ENCODE measurements at regions of chr1 and their contacts with region 1.

Region 1: GRCh38 chr1:52002038-52002917 is 11.8 kb upstream of the RAB3B start:
- DNase-seq: peak; percentile 86
- H3K4me3 ChIP-seq: no peak overlapping the region
- H3K27ac ChIP-seq: no peak overlapping the region
- H3K4me1 ChIP-seq: no peaks in the 10 kb centered on the region
- CTCF ChIP-seq: peak; percentile 96

Region 2: DNA sequence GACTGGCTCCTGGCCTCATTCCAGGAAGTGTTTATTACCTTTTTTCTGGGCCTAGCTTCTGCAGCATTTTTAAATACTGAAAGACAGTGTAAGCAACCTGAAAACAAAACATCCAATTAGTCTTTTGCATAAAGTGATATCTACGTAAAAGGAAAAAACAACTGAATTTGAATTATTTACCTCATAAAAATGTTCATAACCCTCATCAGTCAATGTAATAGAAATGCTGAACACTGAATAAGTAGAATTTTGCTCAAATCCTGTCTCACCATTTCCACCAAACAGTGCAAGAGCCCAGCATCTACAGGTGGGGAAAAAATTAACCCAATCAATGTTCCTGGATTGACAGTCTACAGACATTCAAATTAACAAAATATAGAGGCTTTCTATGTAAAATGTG is 187.8 kb before region 1 on chr1:
- CTCF ChIA-PET with region 1: no interaction called
- POLR2A ChIA-PET with region 1: no interaction called
- intact Hi-C with region 1: loop called (anchors 5 kb)
- DNase-seq: no peak
- H3K4me3 ChIP-seq: no peak overlapping the region
- H3K27ac ChIP-seq: no peak overlapping the region
- H3K4me1 ChIP-seq: no peaks in the 10 kb centered on the region
- CTCF ChIP-seq: no peak

Region 3: DNA sequence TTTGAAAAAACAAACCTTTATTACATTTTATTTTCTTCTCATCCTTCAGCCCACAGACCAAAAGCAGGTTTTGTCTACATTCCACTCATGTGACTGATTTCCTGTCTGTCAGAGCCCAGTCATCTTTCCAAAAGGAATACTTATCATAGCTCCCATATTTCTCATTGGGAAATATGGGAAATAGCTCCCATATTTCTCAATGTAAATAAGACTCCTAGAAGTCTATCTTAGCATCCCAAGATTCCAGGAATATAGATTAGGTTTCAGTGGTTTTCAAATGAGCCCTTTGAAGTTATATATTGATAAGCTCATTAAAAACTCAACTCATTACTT is 104.6 kb before region 1 on chr1:
- CTCF ChIA-PET with region 1: interaction called, 3 read pairs
- POLR2A ChIA-PET with region 1: no interaction called
- intact Hi-C with region 1: loop called (anchors 1 kb)
- DNase-seq: no peak
- H3K4me3 ChIP-seq: no peak overlapping the region
- H3K27ac ChIP-seq: no peak overlapping the region
- H3K4me1 ChIP-seq: no peaks in the 10 kb centered on the region
- CTCF ChIP-seq: no peak

Region 4: DNA sequence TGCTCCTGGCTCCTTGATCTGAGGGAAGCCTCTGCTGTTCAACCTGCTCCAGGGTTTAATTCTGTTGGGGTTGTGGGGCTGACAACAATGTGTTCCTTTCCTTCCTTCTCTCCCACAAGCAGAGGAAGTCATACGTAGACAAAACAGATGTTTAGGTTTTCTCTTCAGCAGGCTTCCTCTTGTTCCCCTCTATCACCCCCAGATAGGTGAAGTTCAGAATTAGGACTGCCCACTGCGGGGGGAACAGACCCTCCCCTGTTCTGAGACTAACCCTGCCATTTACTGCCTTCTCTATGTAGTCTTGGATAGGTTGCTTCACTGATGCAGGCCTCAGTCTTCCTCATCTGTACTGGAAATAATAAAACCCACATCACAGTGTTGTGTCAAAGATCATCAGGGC is 93.8 kb before region 1 on chr1:
- CTCF ChIA-PET with region 1: no interaction called
- POLR2A ChIA-PET with region 1: no interaction called
- intact Hi-C with region 1: no loop called
- DNase-seq: no peak
- H3K4me3 ChIP-seq: no peak overlapping the region
- H3K27ac ChIP-seq: no peak overlapping the region
- H3K4me1 ChIP-seq: peaks cover 5% of the 10 kb centered on the region
- CTCF ChIP-seq: no peak

Region 5: GRCh38 chr1:51926171-51926812 is 76.0 kb before region 1 on chr1:
- CTCF ChIA-PET with region 1: no interaction called
- POLR2A ChIA-PET with region 1: no interaction called
- intact Hi-C with region 1: no loop called
- DNase-seq: peak; percentile 13
- H3K4me3 ChIP-seq: no peak overlapping the region
- H3K27ac ChIP-seq: no peak overlapping the region
- H3K4me1 ChIP-seq: no peaks in the 10 kb centered on the region
- CTCF ChIP-seq: peak; percentile 62

Measured in OCI-LY7 (cell line).